Cardiac septum (tissue), 1 donor: ENCODE measurements at regions of chr2 and their contacts with region 1.

Region 1: GRCh38 chr2:40281021-40281940 is 170.6 kb downstream of the SLC8A1 start:
- DNase-seq: no peak

Region 2: DNA sequence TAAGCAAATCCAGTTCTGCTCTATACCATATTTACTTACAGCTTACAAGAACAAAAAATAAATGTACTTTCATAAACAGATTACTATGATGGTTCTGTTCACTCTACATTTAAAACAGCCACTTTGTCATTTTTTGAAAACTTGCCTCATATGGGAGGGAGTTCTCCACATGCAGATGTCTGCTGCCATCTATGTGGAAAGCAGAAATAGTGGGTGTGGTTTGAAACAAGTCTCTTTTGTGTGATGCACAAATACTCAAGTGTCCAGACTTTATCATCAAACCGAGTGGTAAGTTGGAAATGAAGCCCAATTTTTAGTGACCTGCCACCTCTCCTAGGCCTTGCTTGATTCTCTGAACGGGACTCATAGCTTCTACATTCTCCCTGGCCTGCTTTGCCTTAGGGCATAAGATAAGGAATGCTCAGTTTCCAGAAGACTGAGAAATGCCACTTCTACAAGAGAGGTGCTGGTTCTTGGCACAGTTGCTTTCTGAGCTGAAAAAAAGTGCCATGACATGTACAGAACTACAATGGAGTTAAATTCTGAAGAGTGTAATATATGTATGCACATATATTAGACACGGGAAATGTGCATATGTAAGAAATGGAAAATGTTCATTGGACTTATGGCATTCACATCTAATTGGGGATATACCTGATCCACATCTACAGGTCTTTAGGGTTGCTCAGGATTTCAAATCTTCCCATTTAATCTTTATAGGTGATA is 50.4 kb before region 1 on chr2:
- intact Hi-C with region 1: no loop called
- DNase-seq: no peak

Region 3: DNA sequence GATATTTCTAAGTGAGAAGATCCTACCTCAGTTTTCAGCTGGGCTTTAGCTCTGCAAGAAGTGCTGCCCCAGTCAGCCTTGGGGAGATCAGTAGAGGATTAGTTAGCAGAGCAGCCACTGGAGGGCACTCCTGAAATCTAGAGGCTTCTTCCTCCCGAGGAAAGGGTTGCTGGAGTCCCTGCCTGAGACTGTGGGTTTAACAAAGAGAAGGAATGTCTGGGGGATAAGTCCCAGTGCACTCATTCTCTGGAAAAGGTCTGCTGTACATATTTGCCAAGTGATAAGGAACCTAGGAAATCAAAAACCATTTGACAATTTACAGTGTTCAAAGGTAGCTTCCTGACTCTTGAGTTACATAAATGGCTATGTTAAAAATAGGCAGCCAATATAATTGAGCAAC is 36.6 kb before region 1 on chr2:
- intact Hi-C with region 1: loop called (anchors 5 kb)
- DNase-seq: peak; percentile 79

Region 4: GRCh38 chr2:40341198-40341597 is 59.9 kb after region 1 on chr2:
- intact Hi-C with region 1: no loop called
- DNase-seq: no peak

Region 5: DNA sequence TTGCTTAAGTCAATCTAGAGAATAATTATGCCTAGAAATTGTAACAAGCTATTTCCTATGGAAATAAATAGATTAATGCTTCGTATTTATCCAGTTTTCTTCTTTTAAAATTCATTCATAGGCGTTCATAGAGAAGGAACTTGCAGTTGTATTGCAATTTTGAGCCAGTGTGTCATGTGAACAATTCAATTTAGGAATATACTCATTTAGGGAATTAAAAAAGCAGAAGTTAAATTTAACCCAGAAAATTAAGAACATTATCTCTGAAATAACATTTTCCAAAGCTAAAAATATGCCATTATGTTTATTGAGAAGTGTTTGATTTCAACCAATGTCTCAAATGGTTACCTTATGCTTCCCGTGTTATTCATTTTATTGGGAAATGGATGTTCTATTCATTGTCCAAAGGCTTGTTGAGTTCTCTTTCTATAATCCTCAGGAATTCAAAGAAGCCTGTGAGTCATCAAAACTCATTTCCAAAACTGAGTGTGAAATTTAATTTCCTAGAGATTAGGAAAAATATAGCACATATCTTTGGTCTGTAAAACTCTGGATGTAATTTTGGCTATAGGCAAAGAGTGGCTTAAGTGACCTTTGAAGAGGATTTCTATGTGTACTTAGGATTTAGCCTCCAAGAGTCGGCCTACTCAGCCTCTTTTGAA is 70.9 kb after region 1 on chr2:
- intact Hi-C with region 1: loop called (anchors 5 kb)
- DNase-seq: no peak

Region 6: DNA sequence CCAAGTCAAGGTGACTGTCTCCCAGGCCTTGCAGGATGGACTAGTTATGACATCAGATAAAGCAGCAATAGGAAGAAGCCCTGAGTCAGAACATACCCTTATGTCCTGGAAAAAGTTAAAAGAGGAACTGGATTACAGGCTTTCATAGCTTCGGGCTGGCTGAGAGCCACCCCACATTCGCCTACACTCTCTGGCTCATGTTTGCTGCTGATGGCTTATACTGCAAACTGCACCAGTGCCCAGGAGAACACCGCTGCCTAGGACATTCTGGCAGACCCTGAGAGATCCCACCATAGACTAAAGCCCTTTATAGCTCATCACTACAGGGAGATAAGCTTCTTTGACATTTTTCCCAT is 150.3 kb after region 1 on chr2:
- intact Hi-C with region 1: loop called (anchors 10 kb)
- DNase-seq: no peak

Region 7: GRCh38 chr2:40448468-40449079 is 167.3 kb after region 1 on chr2:
- intact Hi-C with region 1: loop called (anchors 2 kb)
- DNase-seq: no peak

Region 8: DNA sequence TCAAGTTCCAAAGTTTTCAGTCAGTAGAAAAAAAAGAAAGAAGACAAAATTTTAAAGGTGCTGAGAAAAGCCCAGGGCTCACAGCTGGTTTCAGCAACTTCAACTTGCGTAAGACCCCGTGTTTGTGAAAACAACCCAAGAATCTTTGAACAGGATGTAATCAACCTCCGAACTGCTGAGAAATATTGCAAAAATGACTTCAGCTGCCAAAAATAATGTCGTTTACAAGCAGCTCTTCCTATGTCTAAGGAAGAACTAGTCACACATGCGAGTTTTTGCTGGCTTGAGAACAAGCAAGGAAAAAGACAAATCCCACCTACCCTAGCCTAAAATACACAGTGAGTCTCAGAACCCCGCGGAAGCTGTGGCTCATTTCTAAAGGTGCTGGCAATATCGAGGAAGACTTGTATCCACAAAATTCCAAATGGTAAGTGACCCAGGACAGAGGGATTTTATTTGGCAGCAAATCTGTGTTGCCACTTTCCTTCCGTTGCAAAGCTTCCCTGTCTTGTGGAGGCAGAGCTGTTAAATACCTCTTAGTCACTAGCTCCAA is 230.5 kb after region 1 on chr2:
- intact Hi-C with region 1: loop called (anchors 5 kb)
- DNase-seq: peak; percentile 74

Region 9: DNA sequence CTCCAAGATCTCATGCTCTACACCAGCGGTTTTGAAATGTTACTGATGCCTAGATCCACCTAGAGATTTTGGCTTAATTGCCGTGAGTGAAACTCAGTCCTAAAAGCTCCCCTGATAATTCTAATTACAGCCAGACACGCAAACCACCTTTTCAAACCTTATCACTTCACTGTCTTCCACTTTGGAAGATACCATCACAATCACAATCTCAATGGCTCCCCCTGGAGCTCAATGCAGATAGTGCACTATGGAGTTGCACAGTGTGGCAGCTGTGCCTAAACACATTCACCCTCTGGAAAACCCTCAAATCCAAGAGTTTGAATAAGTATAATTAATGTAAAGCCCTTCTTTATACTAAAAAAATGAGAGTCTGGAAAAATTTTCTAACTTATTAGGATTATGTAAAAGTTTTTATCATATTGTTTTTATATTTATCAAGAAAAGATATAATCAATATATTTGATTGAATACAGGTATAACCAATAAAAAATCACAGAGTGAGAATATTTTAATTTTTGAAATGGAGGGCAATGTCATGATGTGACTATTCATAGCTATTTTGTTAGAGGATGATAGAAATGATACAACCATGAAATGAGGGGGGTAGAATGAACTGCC is 273.5 kb after region 1 on chr2:
- intact Hi-C with region 1: loop called (anchors 10 kb)
- DNase-seq: peak; percentile 83